Dendritic cell treated with granulocyte-macrophage colony-stimulating factor and Interleukin-4, amounts not matched to agents 40 ng/mL and 50 ng/mL, for 4 days (primary cell): ENCODE measurements at regions of chr7 and their contacts with region 1.

Region 1: GRCh38 chr7:74289018-74289658 is at the start of gene CLIP2:
- H3K4me3 Mint-ChIP-seq: peak within 1 kb of the TSS; percentile 85
- H3K27ac Mint-ChIP-seq: peak within 1 kb of the TSS; percentile 66
- H3K4me1 Mint-ChIP-seq: peaks cover 64% of the 10 kb centered on the region
- H3K27me3 Mint-ChIP-seq: peaks cover 40% of the 10 kb centered on the region

Region 2: GRCh38 chr7:74254129-74254857 is 34.8 kb before region 1 on chr7 and contains the start of gene RFC2:
- intact Hi-C with region 1: loop called (anchors 1 kb)
- H3K4me3 Mint-ChIP-seq: peak within 1 kb of the TSS; percentile 99
- H3K27ac Mint-ChIP-seq: peak within 1 kb of the TSS; percentile 98
- H3K4me1 Mint-ChIP-seq: peaks cover 46% of the 10 kb centered on the region
- H3K27me3 Mint-ChIP-seq: no peaks in the 10 kb centered on the region